Adrenal gland (tissue), 19 donors: ENCODE measurements at regions of chr4 and their contacts with region 1.

Region 1: DNA sequence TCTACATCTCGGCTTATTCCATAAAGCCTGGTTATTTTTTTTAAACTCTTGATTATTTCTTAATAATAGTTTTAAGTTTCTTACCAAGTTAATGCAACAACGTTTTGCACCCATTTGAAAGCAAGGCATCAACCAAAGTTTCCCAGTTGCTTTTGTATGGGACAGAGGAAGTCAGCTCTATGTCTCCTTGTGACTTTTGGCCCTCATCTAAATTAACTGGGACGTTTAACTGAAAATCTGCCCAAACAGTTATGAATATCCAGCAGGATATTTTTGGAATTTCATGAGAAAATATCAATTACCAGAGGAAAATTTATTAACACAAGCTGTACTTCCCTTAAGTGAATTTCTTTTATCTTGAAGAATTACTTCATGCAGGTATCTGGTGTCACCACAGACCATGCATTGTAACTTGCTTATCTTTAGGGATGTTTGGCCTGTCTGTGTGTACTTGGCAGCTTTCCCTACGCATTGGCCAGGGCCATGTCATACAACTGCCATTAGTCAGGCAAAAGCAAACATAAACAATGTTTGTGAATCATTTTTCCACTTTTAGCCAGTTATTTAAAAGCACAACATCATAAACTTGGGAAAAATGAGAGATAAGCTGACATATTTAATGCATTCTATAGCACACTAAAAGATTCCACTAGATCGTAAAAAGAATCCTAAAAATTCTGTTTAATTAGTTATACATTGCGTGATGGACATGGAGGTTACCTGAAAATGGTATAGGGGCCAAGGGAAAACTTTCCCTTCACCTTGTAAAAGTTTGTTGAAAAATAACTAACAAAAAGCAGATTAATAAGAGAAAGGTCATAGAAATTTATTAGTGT is 101.4 kb upstream of the PDE5A start:
- DNase-seq: peak; percentile 51 to 83 (median 67)
- H3K4me3 ChIP-seq: no peak overlapping the region
- H3K27ac ChIP-seq: peak overlapping the region in 2 of 5 donors; percentile 27 to 28
- H3K4me1 ChIP-seq: peaks cover 0 to 21% of the 10 kb centered on the region in 2 donors
- H3K27me3 ChIP-seq: no peaks in the 10 kb centered on the region
- CTCF ChIP-seq: no peak
- POLR2A ChIP-seq: no peak

Region 2: GRCh38 chr4:119314356-119314755 is 415.7 kb before region 1 on chr4:
- intact Hi-C with region 1: loop called in 1 of 2 experiments (anchors 10 kb)
- DNase-seq: peak in 5 of 7 donors; percentile 14 to 58 (median 22)
- H3K4me3 ChIP-seq: no peak overlapping the region
- H3K27ac ChIP-seq: no peak overlapping the region
- H3K4me1 ChIP-seq: no peaks in the 10 kb centered on the region
- H3K27me3 ChIP-seq: no peaks in the 10 kb centered on the region
- CTCF ChIP-seq: peak; percentile 8 to 68 (median 54)
- POLR2A ChIP-seq: no peak